ACHN (cell line): ENCODE measurements at regions of chr6 and their contacts with region 1.

Region 1: DNA sequence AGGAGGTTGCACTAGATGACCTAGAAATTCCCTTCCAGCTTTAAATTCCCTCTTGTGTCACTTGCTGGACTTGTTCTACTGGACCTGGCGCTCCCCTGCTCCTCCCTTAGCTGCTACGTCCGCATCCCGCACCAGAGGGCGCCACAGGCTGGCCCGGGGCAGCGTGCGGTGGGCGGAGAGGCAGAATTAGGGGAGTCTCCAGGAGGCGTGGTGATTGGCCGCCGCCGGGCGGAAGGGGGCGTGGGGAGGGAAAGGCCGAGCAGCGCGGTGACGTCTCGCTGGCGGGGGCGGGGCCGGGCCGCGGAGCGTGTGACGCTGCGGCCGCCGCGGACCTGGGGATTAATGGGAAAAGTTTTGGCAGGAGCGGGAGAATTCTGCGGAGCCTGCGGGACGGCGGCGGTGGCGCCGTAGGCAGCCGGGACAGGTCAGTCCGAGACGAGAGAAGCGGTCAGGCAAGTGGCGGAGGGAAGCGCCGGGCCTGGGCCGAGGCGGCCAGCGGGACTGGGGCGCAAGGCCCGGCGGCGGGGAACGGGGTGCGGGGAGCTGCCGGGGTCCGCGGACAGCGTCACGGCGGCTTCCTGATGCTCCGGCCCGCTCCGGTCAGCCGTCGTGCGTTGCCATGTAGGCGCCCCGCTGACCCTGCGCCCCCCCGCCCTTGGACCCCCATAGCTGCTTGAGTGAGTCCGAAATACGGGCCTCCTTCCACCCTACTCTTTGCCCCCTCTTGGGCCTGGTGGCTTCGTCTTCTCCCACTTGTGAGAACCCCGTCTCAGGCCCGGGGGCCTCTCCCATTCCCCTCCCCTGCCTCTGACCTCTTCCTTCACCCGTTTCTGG is at the start of gene PPARD:
- DNase-seq: peak; percentile 91

Region 2: DNA sequence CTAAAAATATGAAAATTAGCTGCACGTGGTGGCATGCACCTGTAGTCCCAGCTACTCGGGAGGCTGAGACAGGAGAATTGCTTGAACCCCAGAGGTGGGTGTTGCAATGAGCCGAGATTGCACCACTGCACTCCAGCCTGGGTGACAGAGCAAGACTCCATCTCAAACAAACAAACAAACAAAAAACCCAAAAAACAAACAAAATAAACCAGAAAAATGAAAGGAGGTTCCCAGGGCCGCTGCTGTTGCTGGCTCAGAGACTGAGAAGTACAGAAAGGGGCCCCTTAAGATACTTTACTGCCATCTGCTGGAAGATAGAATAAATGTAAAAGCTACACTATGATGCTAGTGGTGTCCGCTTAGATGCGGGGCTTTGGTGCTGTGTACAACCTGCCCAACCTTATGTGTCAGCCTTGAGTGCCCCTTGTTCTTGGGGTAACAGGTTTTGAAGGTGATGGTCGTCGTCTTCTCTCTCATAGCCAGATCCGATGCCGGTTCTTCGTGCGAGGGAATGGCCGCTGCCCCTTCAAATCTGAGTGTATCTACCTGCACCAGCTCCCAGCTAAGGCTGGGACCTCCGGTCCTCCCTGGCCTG is 106.9 kb after region 1 on chr6:
- in situ Hi-C with region 1: loop called (anchors 25 kb)
- DNase-seq: peak; percentile 73

Region 3: GRCh38 chr6:35461244-35461643 is 118.8 kb after region 1 on chr6:
- in situ Hi-C with region 1: no loop called
- DNase-seq: no peak